PC-9 (cell line): ENCODE measurements at regions of chr3 and their contacts with region 1.

Region 1: GRCh38 chr3:169668957-169669681 is 5.6 kb upstream of the MECOM start:
- DNase-seq: peak; percentile 78 to 88
- H3K4me3 ChIP-seq: peak overlapping the region; percentile 61
- H3K27ac ChIP-seq: no peak overlapping the region
- H3K4me1 ChIP-seq: peaks cover 18% of the 10 kb centered on the region; the same call in 1 of the 2 replicates
- H3K27me3 ChIP-seq: peaks cover 4% of the 10 kb centered on the region; the same call in 1 of the 2 replicates
- CTCF ChIP-seq: peak; percentile 91

Region 2: GRCh38 chr3:168511428-168512014 is 1157.6 kb before region 1 on chr3:
- CTCF ChIA-PET with region 1: no interaction called
- POLR2A ChIA-PET with region 1: no interaction called
- intact Hi-C with region 1: loop called (anchors 5 kb)
- DNase-seq: no peak
- H3K4me3 ChIP-seq: no peak overlapping the region
- H3K27ac ChIP-seq: no peak overlapping the region
- H3K4me1 ChIP-seq: no peaks in the 10 kb centered on the region
- H3K27me3 ChIP-seq: no peaks in the 10 kb centered on the region
- CTCF ChIP-seq: peak; percentile 74

Region 3: DNA sequence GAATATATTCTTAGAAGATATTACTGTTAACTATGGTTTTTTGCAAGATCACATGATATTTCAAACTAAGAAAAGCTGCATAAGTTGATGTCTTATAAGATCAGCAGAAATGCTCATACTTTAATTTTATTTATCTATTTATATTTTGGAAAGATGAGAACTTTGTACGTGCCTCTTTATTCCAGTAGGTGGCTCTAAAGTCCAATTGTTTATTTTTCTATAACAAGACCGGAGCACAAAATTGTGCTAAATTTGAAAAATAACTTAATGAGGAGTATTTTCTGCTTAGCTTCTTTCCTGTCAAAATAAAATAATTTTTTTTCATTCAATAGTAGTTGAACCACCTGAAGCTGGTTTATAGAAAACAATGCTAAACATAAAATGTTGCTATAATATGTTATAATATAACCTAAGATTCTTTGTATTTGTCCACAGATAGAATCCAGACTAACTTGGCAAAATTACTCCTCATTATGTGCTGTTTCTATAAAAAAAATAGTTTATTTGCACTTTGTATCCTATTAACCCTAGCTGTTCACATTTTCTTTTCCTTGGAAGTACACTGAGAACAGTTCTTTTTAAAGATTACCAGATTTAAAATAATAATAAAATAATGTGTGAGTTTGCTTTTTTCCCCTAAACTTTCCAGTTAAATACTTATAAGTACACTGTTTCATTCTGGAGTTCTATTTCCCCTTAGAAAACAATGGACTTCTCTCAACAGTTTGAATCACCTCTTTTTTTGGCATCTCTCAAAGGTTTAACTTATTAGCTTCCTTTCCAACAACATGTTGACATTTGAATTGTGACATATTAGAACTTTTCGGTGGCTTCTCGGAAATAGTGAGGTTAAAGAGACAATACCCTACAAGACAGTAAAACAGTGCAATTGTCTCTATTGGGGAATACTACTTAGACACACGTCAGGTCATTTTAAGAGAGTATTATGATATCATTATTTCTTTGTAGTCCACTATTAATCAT is 535.6 kb before region 1 on chr3:
- CTCF ChIA-PET with region 1: interaction called, 5 read pairs
- POLR2A ChIA-PET with region 1: no interaction called
- intact Hi-C with region 1: loop called (anchors 1 kb)
- DNase-seq: no peak
- H3K4me3 ChIP-seq: no peak overlapping the region
- H3K27ac ChIP-seq: 0 out of 2 replicates have a peak overlapping the region, but pooled peaks have one; percentile 13
- H3K4me1 ChIP-seq: peaks cover 19% of the 10 kb centered on the region; the same call in 1 of the 2 replicates
- H3K27me3 ChIP-seq: no peaks in the 10 kb centered on the region
- CTCF ChIP-seq: peak; percentile 82

Region 4: DNA sequence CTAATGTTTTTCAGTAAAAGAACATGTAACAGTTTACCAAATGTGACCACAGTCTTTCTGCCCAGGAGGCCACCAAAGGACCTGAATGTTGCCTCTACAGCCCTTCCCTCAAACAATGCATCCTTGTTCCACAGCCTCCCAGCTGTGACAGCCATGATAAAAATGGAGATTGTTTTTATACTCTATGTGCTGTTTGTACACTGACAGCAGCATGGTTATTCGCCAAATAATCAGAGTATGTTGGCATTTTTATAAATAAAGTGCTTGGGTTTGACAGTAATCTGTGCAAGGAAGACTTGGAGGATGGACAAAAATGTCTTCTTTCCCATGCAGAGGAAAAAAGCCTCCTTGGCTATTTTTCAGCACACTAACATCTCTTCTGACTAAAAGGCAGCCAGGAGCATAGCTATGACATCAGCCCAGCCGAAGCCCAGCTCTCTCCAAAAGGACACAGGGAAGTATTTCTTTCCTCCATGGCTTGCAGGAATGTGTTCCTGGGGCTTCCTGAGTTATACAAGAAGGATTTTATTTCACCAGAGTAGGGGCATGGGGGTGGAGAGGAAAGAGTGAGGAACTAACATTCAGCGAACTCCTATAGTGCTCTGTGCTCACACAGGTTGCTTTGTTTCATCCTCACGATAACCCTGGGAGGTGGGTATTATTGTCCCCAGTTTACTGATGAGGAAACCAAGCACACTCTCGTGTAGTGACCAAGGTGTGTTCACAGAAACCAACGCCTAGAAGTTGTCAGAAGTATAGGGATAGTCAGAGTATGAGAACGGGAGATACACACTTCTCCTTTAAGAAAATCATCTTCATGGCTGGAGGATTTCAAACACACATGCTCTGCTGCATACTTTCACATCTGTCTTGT is 345.3 kb before region 1 on chr3:
- CTCF ChIA-PET with region 1: interaction called, 4 read pairs
- POLR2A ChIA-PET with region 1: no interaction called
- intact Hi-C with region 1: loop called (anchors 10 kb)
- DNase-seq: no peak
- H3K4me3 ChIP-seq: no peak overlapping the region
- H3K27ac ChIP-seq: no peak overlapping the region
- H3K4me1 ChIP-seq: peaks cover 70% of the 10 kb centered on the region
- H3K27me3 ChIP-seq: no peaks in the 10 kb centered on the region
- CTCF ChIP-seq: no peak

Region 5: GRCh38 chr3:169871129-169871886 is 202.2 kb after region 1 on chr3:
- CTCF ChIA-PET with region 1: no interaction called
- POLR2A ChIA-PET with region 1: no interaction called
- intact Hi-C with region 1: no loop called
- DNase-seq: no peak
- H3K4me3 ChIP-seq: no peak overlapping the region
- H3K27ac ChIP-seq: no peak overlapping the region
- H3K4me1 ChIP-seq: peaks cover 19% of the 10 kb centered on the region
- H3K27me3 ChIP-seq: no peaks in the 10 kb centered on the region
- CTCF ChIP-seq: no peak